ENCODE measurements at regions of chr18 and their contacts with region 1.

Region 1: DNA sequence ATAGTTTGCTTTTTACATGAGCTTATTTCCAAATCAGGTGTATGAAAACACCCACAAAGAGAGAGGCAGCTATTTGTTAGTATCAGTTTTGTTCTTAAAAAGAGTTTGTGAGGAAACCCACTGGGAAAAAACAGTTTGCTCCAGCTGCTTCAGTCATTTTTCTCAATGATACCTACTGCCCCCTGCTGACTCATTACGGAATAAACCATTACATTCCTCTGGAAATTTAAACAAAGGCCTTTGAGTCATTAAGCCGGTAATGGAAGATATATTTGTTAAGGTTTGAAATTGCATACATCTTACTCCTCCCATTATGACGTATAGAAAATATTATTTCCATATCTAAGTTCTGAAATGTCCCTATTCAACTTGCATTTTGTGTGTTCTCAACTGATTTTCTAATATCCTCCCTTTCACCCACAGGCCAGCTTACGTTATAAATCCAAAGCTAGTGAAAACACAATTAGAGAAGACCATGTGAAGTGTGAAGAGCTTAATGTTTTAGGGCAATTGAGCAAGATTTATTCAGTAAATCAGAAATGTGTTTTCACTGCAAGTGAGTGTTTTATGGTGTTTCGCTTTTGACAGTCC is 761.6 kb downstream of the DSC3 start:
- DNase-seq: no peak
- ATAC-seq: no peak
- H3K4me3 ChIP-seq: no peak overlapping the region
- H3K27ac ChIP-seq: no peak overlapping the region
- H3K4me1 ChIP-seq: no peaks in the 10 kb centered on the region
- H3K27me3 ChIP-seq: no peaks in the 10 kb centered on the region
- CTCF ChIP-seq: peak; percentile 32 to 65 (median 51)
- POLR2A ChIP-seq: no peak

Region 2: DNA sequence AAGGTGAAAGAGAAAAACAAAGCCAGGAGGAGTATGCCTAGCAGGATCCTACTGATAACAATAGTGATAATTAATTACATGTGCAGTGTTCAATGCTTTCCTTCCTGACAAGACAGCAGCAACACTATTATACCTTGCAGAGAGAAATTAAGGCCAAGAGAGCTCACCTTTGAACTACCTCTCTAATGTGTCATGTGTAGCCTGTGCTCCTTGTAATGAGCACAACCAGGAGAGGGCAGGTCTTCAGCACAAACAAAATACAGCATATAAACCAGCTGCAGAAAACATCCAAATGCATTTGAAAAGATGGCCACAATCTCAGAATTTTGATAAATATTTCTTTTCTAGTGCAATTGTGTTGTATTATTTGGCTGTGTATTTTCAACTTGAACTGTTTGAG is 664.1 kb before region 1 on chr18:
- intact Hi-C with region 1: loop called in 3 of 10 experiments (anchors 5 to 10 kb)
- DNase-seq: no peak
- ATAC-seq: peak in 2 of 4 donors; percentile 50 to 53
- H3K4me3 ChIP-seq: no peak overlapping the region
- H3K27ac ChIP-seq: no peak overlapping the region
- H3K4me1 ChIP-seq: no peaks in the 10 kb centered on the region
- H3K27me3 ChIP-seq: no peaks in the 10 kb centered on the region
- CTCF ChIP-seq: peak in 9 of 12 donors; percentile 12 to 42 (median 31)
- POLR2A ChIP-seq: no peak

Region 3: DNA sequence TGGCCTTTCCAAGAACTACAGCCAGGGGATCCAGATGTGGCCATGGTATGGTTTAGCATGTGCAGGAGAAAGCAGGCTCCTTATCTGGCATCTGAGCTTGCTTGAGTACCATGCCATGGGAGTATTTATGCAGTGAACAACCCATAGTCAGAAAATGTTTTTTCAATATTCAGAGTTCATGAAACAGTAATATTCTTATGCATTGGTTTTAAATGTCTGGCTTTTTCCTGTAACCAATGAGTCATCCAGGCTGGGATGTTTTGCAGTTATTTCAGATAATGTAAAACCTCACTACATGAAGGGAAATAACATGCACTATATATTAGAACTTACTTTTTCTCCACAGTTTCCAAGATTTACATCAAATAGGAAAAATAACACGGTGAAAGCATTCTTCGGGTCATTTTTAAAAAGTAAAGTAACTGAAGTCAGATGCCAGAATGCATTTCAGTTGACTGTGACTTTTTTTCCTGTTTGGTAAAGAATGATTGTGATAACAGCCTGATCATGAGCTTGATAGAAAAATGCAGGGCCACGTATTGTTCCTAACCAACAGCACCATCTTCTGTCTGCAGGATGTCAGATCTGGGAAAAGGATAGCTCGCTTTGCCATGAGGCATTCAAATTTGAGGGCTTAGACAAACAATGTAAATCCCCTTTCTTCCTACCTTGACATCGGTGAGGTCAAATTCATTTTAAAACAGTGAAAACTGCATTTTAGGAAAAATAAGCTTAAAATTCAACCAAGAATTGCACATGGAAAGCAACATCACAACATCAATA is 608.7 kb after region 1 on chr18:
- intact Hi-C with region 1: loop called in 1 of 10 experiments (anchors 10 kb)
- DNase-seq: no peak
- ATAC-seq: no peak
- H3K4me3 ChIP-seq: no peak overlapping the region
- H3K27ac ChIP-seq: no peak overlapping the region
- H3K4me1 ChIP-seq: no peaks in the 10 kb centered on the region
- H3K27me3 ChIP-seq: no peaks in the 10 kb centered on the region
- CTCF ChIP-seq: peak in 10 of 12 donors; percentile 12 to 49 (median 36)
- POLR2A ChIP-seq: no peak